Stomach (tissue), 19 donors: ENCODE measurements at regions of chr4 and their contacts with region 1.

Region 1: DNA sequence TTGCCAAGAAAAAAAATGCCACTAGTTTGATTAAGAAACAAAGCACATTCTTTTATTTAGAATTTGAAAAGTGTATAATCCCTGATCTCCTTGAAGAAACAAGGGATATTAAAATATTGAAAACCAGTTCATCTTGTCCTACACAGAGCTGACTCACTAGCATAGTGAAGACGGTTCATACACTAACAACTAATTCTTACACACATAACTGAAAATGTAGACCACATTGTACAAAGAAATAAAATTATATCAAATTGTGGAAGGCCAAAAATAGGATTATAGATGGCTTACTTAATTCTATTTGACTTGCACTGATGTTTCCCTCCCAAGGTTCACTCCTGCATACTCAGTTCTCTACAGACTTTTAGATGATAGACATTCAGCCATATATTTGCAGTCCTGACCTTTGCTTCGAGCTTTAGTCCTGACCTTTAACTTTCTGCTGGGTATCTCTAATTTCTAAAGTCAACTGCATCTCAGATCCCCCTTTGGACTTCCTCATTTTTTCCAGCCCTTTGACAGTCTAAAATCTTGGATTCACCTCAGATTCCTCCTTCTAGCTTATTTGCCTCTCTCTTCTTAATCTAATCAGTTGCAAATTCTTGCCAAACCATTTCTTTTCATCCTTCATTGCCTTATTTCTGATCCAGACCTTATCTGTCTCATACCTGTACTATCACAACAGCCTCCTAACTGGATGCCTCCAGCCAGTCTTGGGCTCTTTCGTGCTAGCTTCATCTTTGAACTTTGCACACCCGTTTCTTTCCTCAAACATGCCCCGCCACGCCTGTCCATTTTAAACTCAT is 4.5 kb upstream of the WWC2 start:
- DNase-seq: no peak
- H3K4me3 ChIP-seq: no peak overlapping the region
- H3K27ac ChIP-seq: no peak overlapping the region
- H3K4me1 ChIP-seq: peaks cover 0 to 11% (median 8%) of the 10 kb centered on the region in 4 donors
- H3K27me3 ChIP-seq: peaks cover 0 to 23% (median 0%) of the 10 kb centered on the region in 3 donors
- CTCF ChIP-seq: no peak
- EP300 ChIP-seq: no peak
- POLR2A ChIP-seq: no peak

Region 2: DNA sequence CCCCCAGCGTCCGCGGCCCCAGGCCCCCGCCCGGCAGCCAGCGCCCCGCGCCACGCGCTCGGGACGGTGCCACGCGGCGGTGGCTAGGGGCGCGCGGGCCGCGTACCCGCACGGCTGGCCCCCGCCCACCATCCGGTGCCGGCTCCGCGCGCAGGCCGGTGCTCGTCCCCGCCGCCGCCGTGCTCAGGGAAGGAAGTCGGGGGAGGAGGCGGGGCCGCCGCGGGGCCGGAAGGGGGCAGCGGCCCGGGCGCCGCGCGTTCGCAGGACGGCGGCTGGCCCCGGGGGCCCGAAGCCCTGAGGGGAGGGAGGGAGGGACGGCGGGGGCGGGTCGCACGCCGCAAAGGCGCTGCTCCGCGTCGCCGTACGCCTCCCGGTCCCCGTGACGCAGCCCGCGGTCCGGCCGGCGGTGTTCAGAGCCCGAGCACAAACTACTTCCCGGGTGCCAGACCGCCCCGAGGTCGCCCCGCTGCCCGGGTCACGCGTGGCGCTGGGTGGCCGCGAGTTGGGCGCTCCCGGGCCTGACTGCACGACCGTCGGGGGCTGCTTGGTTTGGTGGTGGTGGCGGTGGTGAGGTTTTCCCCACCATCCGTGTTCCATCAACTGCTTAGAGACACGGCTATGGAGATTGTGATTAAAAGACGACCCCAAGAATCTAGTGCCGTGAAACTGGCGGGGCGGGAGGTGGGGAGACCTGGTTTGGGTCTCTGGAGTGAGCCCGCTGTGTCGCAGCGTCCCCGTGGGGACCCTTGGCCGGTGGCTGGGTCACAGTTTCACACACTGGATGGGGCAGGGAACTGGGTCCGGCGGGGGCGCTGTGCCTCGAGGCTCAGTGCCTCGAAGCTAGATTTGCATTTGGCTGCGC is 177.2 kb before region 1 on chr4 and contains the start of gene DCTD:
- intact Hi-C with region 1: no loop called
- DNase-seq: peak; percentile 82 to 94
- H3K4me3 ChIP-seq: peak within 1 kb of the TSS; percentile 56 to 81 (median 72)
- H3K27ac ChIP-seq: peak within 1 kb of the TSS; percentile 94 to 99 (median 95)
- H3K4me1 ChIP-seq: peaks cover 6 to 39% (median 25%) of the 10 kb centered on the region in 4 donors
- H3K27me3 ChIP-seq: no peaks in the 10 kb centered on the region
- CTCF ChIP-seq: peak in 3 of 7 experiments; percentile 6 to 34 (median 23)
- EP300 ChIP-seq: no peak
- POLR2A ChIP-seq: peak in 1 of 4 donors; percentile 35
- total RNA-seq, gene DCTD: 3.5 to 90.6 (median 81.7) TPM

Region 3: DNA sequence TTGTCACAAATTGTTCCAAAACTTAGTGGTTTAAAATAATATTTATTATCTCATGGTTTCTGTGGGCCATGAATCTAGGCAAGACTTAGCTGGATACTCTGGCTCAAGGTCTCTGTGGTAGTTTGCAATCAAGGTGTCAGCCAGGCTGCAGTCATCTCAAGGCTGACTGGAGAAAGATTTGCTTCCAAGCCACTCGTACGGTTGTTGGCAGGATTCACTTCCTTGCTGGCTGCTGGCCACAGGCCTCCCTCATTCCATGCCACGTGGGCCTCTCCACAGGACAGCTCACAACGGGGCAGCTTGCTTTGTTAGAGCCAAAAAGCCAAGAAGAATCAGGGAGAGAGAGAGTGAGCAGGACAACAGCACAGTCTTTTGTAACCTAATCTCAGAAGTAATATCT is 105.9 kb after region 1 on chr4:
- intact Hi-C with region 1: no loop called
- DNase-seq: peak; percentile 12 to 79
- H3K4me3 ChIP-seq: no peak overlapping the region
- H3K27ac ChIP-seq: peak overlapping the region in 1 of 5 donors; percentile 25
- H3K4me1 ChIP-seq: peaks cover 0 to 17% (median 11%) of the 10 kb centered on the region in 4 donors
- H3K27me3 ChIP-seq: no peaks in the 10 kb centered on the region
- CTCF ChIP-seq: no peak
- EP300 ChIP-seq: no peak
- POLR2A ChIP-seq: no peak

Region 4: GRCh38 chr4:183249857-183250256 is 155.3 kb after region 1 on chr4:
- intact Hi-C with region 1: loop called (anchors 5 kb)
- DNase-seq: peak in 1 of 2 donors; percentile 74
- H3K4me3 ChIP-seq: no peak overlapping the region
- H3K27ac ChIP-seq: peak overlapping the region in 3 of 5 donors; percentile 10 to 69 (median 23)
- H3K4me1 ChIP-seq: peaks cover 0 to 43% (median 23%) of the 10 kb centered on the region in 4 donors
- H3K27me3 ChIP-seq: no peaks in the 10 kb centered on the region
- CTCF ChIP-seq: peak in 2 of 7 experiments; percentile 39 to 58
- EP300 ChIP-seq: no peak
- POLR2A ChIP-seq: no peak